ENCODE measurements at regions of chr12 and their contacts with region 1.

Region 1: GRCh38 chr12:78002878-78003277 is 172.2 kb downstream of the NAV3 start:
- DNase-seq: no peak
- ATAC-seq: no peak
- H3K4me3 ChIP-seq: no peak overlapping the region
- H3K27ac ChIP-seq: no peak overlapping the region
- H3K4me1 ChIP-seq: peaks cover 0 to 7% (median 0%) of the 10 kb centered on the region in 12 donors
- H3K27me3 ChIP-seq: no peaks in the 10 kb centered on the region
- CTCF ChIP-seq: no peak
- POLR2A ChIP-seq: no peak

Region 2: GRCh38 chr12:78096909-78097597 is 94.2 kb after region 1 on chr12:
- intact Hi-C with region 1: loop called in 1 of 10 experiments (anchors 10 kb)
- DNase-seq: no peak
- ATAC-seq: no peak
- H3K4me3 ChIP-seq: no peak overlapping the region
- H3K27ac ChIP-seq: peak overlapping the region in 1 of 12 donors; percentile 3
- H3K4me1 ChIP-seq: no peaks in the 10 kb centered on the region
- H3K27me3 ChIP-seq: no peaks in the 10 kb centered on the region
- CTCF ChIP-seq: peak in 1 of 12 donors; percentile 16
- POLR2A ChIP-seq: no peak

Region 3: GRCh38 chr12:79174626-79175025 is 1171.7 kb after region 1 on chr12:
- intact Hi-C with region 1: loop called in 1 of 10 experiments (anchors 10 kb)
- DNase-seq: no peak
- ATAC-seq: peak in 2 of 4 donors; percentile 48 to 50
- H3K4me3 ChIP-seq: no peak overlapping the region
- H3K27ac ChIP-seq: no peak overlapping the region
- H3K4me1 ChIP-seq: no peaks in the 10 kb centered on the region
- H3K27me3 ChIP-seq: no peaks in the 10 kb centered on the region
- CTCF ChIP-seq: peak in 10 of 12 donors; percentile 5 to 41 (median 19)
- POLR2A ChIP-seq: no peak

Measured in heart left ventricle (tissue), 16 donors.